ENCODE measurements at regions of chr16 and their contacts with region 1.

Region 1: GRCh38 chr16:85415194-85416090 is 197.7 kb upstream of the GSE1 start:
- DNase-seq: peak in 6 of 10 donors; percentile 9 to 66 (median 26)
- H3K4me3 ChIP-seq: no peak overlapping the region
- H3K27ac ChIP-seq: peak overlapping the region in 1 of 59 donors; percentile 55
- H3K27me3 ChIP-seq: no peaks in the 10 kb centered on the region
- CTCF ChIP-seq: no peak

Region 2: DNA sequence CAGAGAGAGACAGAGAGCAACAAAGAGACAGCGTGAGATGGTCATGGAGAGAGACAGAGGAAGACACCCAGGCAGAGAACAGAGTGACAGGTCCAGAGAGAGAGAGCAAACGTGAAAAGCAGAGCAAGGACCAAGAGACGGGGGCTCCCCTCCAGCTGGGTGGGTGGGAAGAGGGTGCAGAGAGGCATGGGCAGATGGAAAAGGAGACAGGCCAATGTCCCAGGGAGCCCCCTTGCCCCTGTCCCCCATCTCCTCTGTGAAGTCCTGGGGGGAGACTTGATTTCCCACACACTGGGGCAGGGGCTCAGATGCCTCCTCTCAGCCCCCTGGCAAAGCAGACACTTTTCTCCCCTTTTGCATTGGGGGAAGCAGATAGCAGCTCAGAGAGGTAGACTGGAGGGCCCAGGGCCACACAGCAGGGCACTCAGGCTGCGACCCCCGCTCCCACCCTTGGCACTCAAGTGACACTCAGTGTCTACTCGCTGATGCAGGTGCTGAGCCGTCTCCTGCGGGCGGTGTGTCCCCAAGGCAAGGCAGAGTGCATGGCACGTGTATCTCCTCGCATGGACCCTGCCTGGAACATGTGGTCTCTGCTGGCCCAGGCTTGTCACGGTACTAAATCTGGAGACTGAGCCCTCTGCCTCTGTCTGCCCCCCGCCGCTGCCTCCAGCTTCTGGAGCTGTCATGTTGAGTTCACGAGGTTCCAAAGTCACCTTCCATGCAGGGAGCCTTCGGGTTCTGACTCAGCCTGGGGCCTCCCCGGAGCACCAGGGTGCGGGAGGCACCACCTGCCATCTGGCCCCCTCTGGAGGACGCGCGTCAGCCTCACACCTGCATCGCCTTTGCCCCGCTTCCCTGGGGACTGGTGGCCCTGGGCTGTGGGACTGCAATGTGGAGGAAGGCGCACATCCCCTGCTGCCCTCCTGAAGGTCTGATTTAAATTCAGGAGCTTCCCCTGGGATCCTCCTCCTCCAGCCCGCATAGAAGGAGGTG is 18.3 kb before region 1 on chr16:
- intact Hi-C with region 1: loop called in 1 of 2 experiments (anchors 2 kb)
- DNase-seq: peak in 7 of 10 donors; percentile 2 to 42 (median 24)
- H3K4me3 ChIP-seq: no peak overlapping the region
- H3K27ac ChIP-seq: no peak overlapping the region
- H3K27me3 ChIP-seq: no peaks in the 10 kb centered on the region
- CTCF ChIP-seq: no peak

Measured in dorsolateral prefrontal cortex (tissue), 120 donors.